Naive thymus-derived CD4-positive, alpha-beta T cell (primary cell): ENCODE measurements at regions of chr9 and their contacts with region 1.

Region 1: DNA sequence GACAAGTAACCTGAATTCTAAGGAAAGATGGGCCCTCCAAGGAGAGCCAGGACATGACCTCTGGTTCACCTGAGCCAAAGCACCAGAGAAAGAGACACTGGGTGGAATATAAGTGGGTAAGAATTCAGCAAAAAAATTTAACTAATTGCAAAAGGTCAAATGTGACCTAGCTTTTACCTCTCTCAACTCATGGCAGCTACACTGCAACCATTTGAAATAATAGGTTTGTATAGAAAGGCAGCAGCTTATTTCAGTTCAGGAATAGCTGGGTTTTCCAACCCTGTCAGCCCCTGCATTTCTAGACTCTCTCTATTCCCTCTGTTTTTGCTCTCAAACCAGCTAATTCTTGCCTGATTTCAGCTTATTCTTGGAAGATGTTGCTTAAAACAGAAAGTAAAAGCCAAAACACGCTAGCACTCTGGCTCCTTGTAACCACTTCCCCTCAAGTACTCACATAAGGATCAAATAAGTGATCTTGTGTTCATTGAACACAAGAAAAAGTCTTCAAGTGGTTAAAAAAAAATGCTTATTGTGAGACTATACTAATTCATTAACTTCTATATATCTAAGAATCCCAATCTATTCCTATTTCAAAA is 101.1 kb upstream of the NR4A3 start:
- DNase-seq: peak in 6 of 9 donors; percentile 19 to 48 (median 36)
- ATAC-seq: peak; percentile 73
- H3K4me3 ChIP-seq: peak overlapping the region; percentile 51
- H3K4me3 Mint-ChIP-seq: peak overlapping the region; percentile 74 to 95 (median 86)
- H3K27ac ChIP-seq: peak overlapping the region; percentile 64
- H3K27ac Mint-ChIP-seq: peak overlapping the region; percentile 86 to 97 (median 94)
- H3K4me1 ChIP-seq: peaks cover 4 to 29% of the 10 kb centered on the region in 2 donors
- H3K4me1 Mint-ChIP-seq: peaks cover 17 to 42% (median 32%) of the 10 kb centered on the region in 7 donors
- H3K27me3 ChIP-seq: no peaks in the 10 kb centered on the region
- H3K27me3 Mint-ChIP-seq: peaks cover 0 to 2% (median 0%) of the 10 kb centered on the region in 5 donors

Region 2: DNA sequence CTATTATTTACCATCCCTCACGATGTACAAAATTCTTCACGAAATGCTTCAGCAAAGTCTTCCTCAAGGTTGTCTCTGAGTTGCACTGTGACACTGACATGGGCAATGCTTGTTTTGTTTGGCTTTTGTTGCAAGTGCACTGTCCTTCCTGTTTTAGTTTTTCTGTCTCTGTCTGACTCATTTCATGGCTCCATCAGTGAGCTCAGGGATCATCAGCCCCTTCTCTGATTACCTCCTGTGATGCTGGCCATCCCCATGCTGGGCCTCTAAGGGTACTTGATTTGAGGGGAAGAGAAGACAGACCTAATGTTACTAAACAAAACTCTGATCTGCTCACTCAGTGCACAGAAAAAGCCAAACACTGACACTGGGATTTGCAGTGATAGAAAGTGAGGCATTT is 148.3 kb after region 1 on chr9:
- CTCF ChIA-PET with region 1: no interaction called
- POLR2A ChIA-PET with region 1: no interaction called
- intact Hi-C with region 1: loop called in 1 of 2 experiments (anchors 10 kb)
- DNase-seq: no peak
- ATAC-seq: no peak
- H3K4me3 ChIP-seq: no peak overlapping the region
- H3K4me3 Mint-ChIP-seq: peak overlapping the region in 1 of 10 donors; percentile 24
- H3K27ac ChIP-seq: no peak overlapping the region
- H3K27ac Mint-ChIP-seq: peak overlapping the region in 1 of 9 donors; percentile 68
- H3K4me1 ChIP-seq: no peaks in the 10 kb centered on the region
- H3K4me1 Mint-ChIP-seq: peaks cover 0 to 36% (median 0%) of the 10 kb centered on the region in 7 donors
- H3K27me3 ChIP-seq: no peaks in the 10 kb centered on the region
- H3K27me3 Mint-ChIP-seq: no peaks in the 10 kb centered on the region